Ovary (tissue), 10 donors: ENCODE measurements at regions of chr1 and their contacts with region 1.

Region 1: GRCh38 chr1:9867408-9868243 is 42.4 kb downstream of the CTNNBIP1 start:
- DNase-seq: peak; percentile 74 to 89 (median 87)
- H3K4me3 ChIP-seq: no peak overlapping the region
- H3K27ac ChIP-seq: no peak overlapping the region
- H3K4me1 ChIP-seq: peaks cover 8% of the 10 kb centered on the region
- H3K27me3 ChIP-seq: no peaks in the 10 kb centered on the region
- CTCF ChIP-seq: peak; percentile 93 to 95 (median 93)
- EP300 ChIP-seq: no peak
- POLR2A ChIP-seq: no peak

Region 2: DNA sequence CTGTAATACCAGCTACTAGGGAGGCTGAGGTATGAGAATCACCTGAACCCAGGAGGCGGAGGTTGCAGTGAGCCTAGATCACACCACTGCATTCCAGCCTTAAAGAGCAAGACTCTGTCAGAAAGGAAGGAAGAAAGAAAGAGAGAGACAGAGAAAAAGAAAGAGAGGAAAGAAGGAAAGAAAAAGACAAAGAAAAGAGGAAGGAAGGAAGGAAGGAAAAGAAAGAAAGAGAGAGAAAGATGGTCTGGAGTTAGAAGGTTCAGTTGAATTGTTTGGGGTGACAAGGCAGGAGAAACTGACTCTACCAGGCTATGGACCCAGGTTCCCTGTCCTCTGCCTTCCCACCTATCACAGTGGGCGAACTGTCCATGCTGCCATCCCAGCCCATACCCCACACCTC is 243.5 kb before region 1 on chr1:
- intact Hi-C with region 1: loop called (anchors 1 to 2 kb)
- DNase-seq: no peak
- H3K4me3 ChIP-seq: no peak overlapping the region
- H3K27ac ChIP-seq: no peak overlapping the region
- H3K4me1 ChIP-seq: peaks cover 7% of the 10 kb centered on the region
- H3K27me3 ChIP-seq: no peaks in the 10 kb centered on the region
- CTCF ChIP-seq: no peak
- EP300 ChIP-seq: no peak
- POLR2A ChIP-seq: no peak

Region 3: DNA sequence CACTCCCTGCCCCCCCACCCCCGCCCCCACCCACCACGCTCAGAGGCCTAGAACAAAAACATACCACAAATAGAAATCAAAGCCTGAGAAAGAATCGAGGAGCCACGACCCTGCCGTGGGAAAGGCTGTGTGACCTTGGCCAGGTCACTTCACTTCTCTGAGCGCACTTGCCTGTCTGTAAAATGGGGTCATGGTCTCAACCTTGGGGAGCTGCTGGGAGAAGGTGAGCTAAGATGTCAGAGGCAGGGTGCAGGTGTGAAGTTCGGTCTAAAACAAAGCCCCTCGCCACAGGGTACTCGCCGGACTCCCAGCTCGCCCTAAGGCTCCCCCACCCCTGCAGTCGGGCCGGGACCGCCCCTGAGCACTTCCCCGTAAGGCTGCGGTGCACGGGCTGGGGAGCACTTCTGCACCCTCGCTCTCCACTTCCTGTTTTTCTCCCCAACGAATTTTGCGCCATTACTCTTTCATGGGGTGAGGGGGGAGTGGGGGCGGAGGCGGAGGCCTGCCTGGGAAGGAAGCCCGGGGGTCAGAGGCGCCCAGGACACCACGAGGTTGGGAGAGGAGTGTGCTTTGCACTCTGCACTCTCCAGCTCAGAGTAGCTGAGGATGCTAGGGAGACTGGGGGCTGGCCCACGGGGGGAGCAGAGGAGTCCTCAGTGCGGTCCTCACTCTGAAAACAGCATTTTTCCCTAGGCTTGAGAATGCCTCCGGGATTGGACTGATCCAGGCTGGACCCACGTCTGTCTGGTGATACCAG is 238.0 kb before region 1 on chr1:
- intact Hi-C with region 1: loop called (anchors 1 to 2 kb)
- DNase-seq: peak; percentile 63 to 82 (median 70)
- H3K4me3 ChIP-seq: no peak overlapping the region
- H3K27ac ChIP-seq: no peak overlapping the region
- H3K4me1 ChIP-seq: peaks cover 14% of the 10 kb centered on the region
- H3K27me3 ChIP-seq: no peaks in the 10 kb centered on the region
- CTCF ChIP-seq: no peak
- EP300 ChIP-seq: no peak
- POLR2A ChIP-seq: no peak

Region 4: DNA sequence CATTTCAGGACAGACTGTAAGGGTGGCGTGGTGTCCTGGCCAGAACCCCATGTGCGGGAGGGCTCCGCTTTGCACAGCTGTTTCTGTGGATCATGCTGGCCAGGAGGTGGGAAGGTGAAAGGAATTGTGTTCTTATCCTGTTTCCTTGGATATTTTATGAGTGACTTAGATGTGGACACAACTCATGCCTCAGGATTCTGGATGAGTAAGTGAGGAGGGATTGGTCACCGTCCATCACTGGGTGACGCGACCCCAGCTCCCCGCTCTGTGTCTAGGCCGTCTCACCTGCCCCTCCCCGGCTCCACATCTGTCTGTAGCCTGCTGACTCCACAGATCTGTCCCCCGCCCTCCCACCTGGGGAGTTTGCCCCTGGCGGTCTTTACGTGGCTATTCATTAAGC is 167.3 kb before region 1 on chr1:
- intact Hi-C with region 1: loop called in 1 of 4 experiments (anchors 5 kb)
- DNase-seq: no peak
- H3K4me3 ChIP-seq: no peak overlapping the region
- H3K27ac ChIP-seq: no peak overlapping the region
- H3K4me1 ChIP-seq: no peaks in the 10 kb centered on the region
- H3K27me3 ChIP-seq: no peaks in the 10 kb centered on the region
- CTCF ChIP-seq: no peak
- EP300 ChIP-seq: no peak
- POLR2A ChIP-seq: no peak

Region 5: DNA sequence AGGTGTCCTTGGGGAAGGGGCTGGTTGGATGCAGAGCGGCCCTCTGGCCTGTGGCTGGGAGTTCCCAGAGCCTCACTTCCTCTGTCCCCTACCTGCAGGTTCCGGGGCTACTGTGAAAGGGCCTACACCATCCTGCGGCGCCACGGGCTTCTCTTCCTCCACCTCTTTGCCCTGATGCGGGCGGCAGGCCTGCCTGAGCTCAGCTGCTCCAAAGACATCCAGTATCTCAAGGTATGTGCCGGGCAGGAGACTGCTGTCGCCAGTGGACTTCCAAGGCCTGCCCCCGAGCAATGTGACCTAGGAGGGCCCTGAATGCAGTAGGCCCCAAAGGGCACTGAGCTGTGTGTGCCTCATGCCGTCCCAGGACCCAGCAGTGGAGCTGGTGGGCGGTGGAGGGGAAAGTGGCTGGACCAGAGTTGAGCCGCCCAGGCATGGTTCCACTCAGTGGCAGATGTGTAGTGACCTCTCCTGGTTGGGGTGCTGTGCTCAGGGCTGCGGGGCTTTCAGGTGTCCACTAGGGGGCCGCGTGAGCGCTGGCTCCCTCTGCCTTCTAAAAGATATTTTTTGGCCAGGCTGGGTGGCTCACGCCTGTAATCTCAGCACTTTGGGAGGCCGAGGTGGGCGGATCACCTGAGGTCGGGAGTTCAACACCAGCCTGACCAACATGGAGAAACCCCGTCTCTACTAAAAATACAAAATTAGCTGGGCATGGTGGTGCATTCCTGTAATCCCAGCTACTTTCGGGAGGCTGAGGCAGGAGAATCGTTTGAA is 142.7 kb before region 1 on chr1:
- intact Hi-C with region 1: loop called in 1 of 4 experiments (anchors 10 kb)
- DNase-seq: no peak
- H3K4me3 ChIP-seq: no peak overlapping the region
- H3K27ac ChIP-seq: no peak overlapping the region
- H3K4me1 ChIP-seq: no peaks in the 10 kb centered on the region
- H3K27me3 ChIP-seq: no peaks in the 10 kb centered on the region
- CTCF ChIP-seq: peak in 1 of 3 donors; percentile 41
- EP300 ChIP-seq: no peak
- POLR2A ChIP-seq: no peak

Region 6: DNA sequence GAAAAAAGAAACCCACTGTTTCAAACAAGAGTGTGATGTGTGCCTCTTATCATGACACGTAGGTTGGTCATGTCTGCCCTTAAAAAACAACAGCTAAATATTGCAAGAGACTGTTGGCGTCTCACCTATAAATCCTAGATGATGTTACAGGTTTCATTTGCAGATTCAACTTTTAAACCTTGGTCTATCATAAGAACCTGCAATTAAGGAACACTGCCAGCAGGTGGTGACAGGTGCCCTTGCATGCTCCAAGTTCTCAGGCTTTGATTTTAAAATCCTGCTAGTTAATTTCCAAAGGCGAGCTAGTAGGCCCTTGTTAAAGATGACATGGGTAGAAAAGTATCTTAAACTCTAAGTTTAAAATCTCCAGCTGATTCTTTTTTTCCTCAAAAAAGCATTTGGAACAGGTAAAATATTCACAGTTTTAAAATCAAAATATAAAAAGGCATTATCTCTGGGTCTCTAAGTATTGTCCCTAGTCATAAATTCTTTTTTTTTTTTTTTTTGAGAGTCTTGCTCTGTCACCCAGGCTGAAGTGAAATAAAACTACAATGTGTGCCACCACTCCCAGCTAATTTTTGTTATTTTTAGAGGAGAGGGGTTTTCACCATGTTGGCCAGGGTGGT is 83.0 kb before region 1 on chr1:
- intact Hi-C with region 1: loop called in 3 of 4 experiments (anchors 2 to 10 kb)
- DNase-seq: peak in 2 of 5 donors; percentile 21 to 33
- H3K4me3 ChIP-seq: no peak overlapping the region
- H3K27ac ChIP-seq: no peak overlapping the region
- H3K4me1 ChIP-seq: no peaks in the 10 kb centered on the region
- H3K27me3 ChIP-seq: no peaks in the 10 kb centered on the region
- CTCF ChIP-seq: peak in 2 of 3 donors; percentile 39 to 40
- EP300 ChIP-seq: no peak
- POLR2A ChIP-seq: no peak